ENCODE measurements at regions of chr18 and their contacts with region 1.

Region 1: DNA sequence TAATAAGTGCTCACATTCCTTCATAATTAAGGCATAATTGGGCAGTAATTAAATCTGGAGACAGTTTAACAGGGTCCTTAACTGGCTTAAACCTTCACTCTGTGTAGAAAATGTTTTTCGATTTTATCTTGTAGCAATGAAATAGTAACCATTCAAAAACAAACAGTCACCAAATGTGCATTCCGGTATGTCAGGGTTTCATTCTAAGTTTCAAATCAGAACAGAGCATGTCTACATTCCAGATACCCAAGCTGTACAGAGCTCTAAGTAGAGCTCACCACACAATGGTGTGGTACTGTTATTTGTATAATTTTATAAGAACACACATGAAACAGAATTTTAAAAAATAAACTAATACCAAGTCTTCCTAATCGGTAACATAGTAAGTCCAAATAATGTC is 52.6 kb downstream of the SMAD2 start:
- DNase-seq: no peak
- CTCF ChIP-seq: no peak

Region 2: DNA sequence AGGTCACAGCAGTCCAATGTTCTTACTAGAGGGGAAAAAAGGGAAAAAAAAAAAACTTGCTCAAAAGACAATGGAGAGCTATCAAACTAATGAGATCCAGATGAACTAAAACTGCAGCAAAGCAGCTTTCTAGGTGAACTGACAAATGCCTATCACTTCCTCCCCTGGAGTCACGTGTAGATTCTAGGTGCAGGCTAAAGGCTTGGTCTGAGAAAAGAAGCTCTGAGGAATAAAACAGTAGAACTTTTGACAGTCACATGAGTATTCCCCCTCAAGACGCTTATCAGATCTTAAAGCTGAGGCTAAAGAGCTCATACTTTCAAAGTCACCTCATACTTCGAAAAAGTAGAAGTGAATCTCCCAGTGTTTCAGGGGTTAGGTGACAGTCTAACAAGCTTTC is 10.3 kb after region 1 on chr18:
- CTCF ChIA-PET with region 1: interaction called, 13 read pairs
- POLR2A ChIA-PET with region 1: no interaction called
- DNase-seq: peak; percentile 12
- CTCF ChIP-seq: no peak

Region 3: GRCh38 chr18:48203961-48204666 is 326.2 kb after region 1 on chr18:
- CTCF ChIA-PET with region 1: no interaction called
- POLR2A ChIA-PET with region 1: no interaction called
- DNase-seq: no peak
- CTCF ChIP-seq: no peak

Measured in GM10248 (cell line).